HepG2 (cell line): ENCODE measurements at regions of chr2 and their contacts with region 1.

Region 1: GRCh38 chr2:125471963-125472362 is 1184.0 kb upstream of the GYPC start:
- DNase-seq: peak; percentile 16
- ATAC-seq: peak; percentile 97
- H3K4me3 ChIP-seq: no peak overlapping the region
- H3K27ac ChIP-seq: no peak overlapping the region
- H3K4me1 ChIP-seq: no peaks in the 10 kb centered on the region
- H3K27me3 ChIP-seq: no peaks in the 10 kb centered on the region
- CTCF ChIP-seq: peak; percentile 70
- EP300 ChIP-seq: no peak
- POLR2A ChIP-seq: no peak
- RAD21 ChIP-seq: no peak

Region 2: GRCh38 chr2:124804014-124804940 is 667.7 kb before region 1 on chr2:
- CTCF ChIA-PET with region 1: no interaction called
- POLR2A ChIA-PET with region 1: no interaction called
- in situ Hi-C with region 1: no loop called
- intact Hi-C with region 1: loop called (anchors 2 kb)
- DNase-seq: peak; percentile 69
- ATAC-seq: peak; percentile 94
- H3K4me3 ChIP-seq: no peak overlapping the region
- H3K27ac ChIP-seq: no peak overlapping the region
- H3K4me1 ChIP-seq: no peaks in the 10 kb centered on the region
- H3K27me3 ChIP-seq: no peaks in the 10 kb centered on the region
- CTCF ChIP-seq: peak; percentile 83
- EP300 ChIP-seq: no peak
- POLR2A ChIP-seq: no peak
- RAD21 ChIP-seq: no peak